ENCODE measurements at regions of chr1 and their contacts with region 1.

Region 1: DNA sequence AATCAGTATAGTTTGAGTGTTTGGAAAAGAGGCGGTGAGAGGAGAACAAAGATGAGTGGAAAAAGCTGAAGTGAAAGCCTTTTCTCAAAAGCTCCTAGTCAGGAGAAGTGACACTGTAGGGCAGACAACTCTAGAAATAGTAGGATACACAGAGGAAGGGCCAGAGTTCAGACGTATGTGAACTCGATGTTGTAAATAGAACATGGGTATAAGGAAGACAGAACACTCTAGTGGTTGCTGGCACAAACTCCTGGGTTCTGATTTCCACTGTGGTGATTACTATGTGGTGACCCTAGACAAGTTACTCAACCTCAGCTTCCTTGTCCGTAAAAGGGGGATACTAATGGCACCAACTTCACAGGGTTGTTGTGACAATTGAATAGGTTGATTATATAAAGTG is 30.2 kb upstream of the MGST3 start:
- DNase-seq: no peak

Region 2: DNA sequence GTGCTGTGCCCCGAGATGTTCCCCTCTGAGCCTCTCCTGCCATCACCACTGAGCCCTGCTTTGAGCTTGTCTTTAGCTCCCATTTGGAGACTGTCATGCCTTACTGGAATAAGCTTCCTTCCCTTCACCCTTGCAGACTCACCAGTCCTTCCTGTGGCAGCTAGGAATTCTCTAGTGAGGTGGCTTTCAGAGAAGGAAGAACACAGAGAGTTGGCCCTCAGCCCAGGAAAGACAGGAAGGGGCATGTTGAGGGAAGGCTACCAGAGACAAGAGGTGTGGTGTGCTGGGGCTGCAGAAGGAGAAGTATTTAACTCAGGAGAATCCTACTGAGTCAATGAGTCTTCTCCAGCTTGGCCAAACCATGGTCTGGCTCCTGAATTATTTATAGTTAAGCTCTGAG is 302.9 kb after region 1 on chr1:
- intact Hi-C with region 1: loop called in 1 of 2 experiments (anchors 5 kb)
- DNase-seq: no peak